ENCODE measurements at regions of chr19 and their contacts with region 1.

Region 1: GRCh38 chr19:44113138-44113783 is at the start of gene ZNF225:
- H3K4me3 Mint-ChIP-seq: peak within 1 kb of the TSS; percentile 95
- H3K27ac Mint-ChIP-seq: peak within 1 kb of the TSS; percentile 95
- H3K4me1 Mint-ChIP-seq: peaks cover 22% of the 10 kb centered on the region
- H3K27me3 Mint-ChIP-seq: peaks cover 3% of the 10 kb centered on the region

Region 2: DNA sequence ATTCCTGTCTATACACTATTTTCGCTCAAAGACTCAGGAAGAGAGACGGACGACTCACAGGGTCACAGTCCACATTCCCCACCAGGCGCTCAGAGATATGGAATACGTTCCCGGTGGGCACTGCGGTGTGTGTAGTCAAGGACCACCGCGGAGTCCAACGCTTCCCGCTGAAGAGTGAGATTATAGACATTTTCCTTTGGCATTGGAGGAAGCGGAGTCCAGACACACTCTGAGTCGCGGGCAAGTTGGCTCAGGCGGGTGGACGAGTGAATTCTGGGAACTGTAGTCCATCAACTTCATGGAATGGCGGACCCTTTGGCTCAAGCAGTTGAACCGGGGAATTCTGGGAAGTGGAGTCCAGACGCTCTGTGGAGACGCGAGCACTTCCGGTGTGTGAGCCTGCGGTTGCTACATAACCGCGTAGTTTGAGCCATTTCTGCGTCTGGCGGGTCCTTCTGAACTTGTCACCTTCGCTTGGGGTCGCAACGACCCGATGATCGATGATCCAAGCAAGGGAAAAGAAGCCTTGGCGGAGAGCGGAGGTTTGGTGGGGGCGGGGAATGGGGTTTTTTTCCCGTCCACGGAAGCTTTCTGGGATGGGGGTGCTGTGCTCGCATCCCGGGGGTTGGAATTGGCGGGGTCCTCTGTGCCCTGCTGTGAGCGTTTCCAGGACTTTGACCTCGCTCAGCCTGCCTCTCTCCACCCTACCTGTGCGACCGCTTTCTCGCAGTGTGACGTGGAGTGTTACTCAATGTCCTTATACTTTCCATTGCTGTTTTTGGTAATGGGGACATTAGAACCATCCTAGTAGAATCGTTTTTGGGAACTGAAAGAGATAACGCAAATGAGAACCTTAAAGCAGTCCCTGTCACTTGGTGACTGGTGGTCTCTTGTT is 110.4 kb before region 1 on chr19 and contains the start of gene ZNF230:
- intact Hi-C with region 1: loop called (anchors 1 kb)
- H3K4me3 Mint-ChIP-seq: peak within 1 kb of the TSS; percentile 97
- H3K27ac Mint-ChIP-seq: peak within 1 kb of the TSS; percentile 94
- H3K4me1 Mint-ChIP-seq: peaks cover 31% of the 10 kb centered on the region
- H3K27me3 Mint-ChIP-seq: peaks cover 2% of the 10 kb centered on the region

Region 3: DNA sequence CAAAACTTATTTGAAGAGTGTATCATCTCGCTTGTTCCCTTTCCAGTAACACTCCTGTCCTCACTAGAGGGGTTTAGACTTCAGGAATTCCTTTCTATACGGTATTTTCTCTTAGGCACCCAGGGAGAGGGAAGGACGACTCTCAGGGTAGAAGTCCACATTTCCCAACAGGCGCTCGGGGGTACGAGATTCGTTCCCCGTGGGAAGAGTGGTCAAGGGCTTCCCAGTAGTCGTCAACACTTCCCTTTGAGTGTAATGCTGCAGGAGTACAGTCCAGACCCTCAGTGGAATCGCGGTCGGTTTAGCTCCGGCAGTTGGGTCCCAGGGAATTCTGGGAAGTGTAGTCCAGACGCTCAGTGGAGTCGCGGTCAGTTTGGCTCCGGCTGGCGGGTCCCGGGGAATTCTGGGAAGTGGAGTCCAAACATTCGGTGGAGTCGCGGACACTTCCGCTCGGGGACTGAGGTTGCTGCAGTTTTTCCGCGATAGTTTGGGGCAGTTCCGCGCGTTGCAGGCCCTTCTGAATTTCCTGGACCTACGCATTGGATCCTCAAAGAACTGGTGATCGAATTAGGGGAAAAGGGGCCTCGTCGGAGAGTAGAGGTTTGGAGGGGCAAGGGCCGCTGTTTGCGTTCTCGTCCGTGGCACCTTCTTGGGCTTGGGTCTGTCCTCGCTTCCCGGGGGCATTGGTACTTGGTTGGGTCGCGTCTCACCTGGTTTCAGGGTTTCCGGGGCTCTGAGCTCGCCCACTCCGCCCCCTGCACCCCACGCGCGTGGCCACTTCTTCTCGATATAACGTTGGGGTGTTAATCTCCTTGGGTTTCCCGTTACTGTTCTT is 19.1 kb before region 1 on chr19 and contains the start of gene ZNF224:
- intact Hi-C with region 1: loop called (anchors 1 kb)
- H3K4me3 Mint-ChIP-seq: peak within 1 kb of the TSS; percentile 95
- H3K27ac Mint-ChIP-seq: peak within 1 kb of the TSS; percentile 93
- H3K4me1 Mint-ChIP-seq: peaks cover 7% of the 10 kb centered on the region
- H3K27me3 Mint-ChIP-seq: peaks cover 3% of the 10 kb centered on the region

Region 4: GRCh38 chr19:44164673-44165512 is 51.6 kb after region 1 on chr19 and contains the start of gene ZNF226:
- intact Hi-C with region 1: loop called (anchors 1 kb)
- H3K4me3 Mint-ChIP-seq: peak within 1 kb of the TSS; percentile 94
- H3K27ac Mint-ChIP-seq: peak within 1 kb of the TSS; percentile 98
- H3K4me1 Mint-ChIP-seq: peaks cover 13% of the 10 kb centered on the region
- H3K27me3 Mint-ChIP-seq: no peaks in the 10 kb centered on the region

Region 5: DNA sequence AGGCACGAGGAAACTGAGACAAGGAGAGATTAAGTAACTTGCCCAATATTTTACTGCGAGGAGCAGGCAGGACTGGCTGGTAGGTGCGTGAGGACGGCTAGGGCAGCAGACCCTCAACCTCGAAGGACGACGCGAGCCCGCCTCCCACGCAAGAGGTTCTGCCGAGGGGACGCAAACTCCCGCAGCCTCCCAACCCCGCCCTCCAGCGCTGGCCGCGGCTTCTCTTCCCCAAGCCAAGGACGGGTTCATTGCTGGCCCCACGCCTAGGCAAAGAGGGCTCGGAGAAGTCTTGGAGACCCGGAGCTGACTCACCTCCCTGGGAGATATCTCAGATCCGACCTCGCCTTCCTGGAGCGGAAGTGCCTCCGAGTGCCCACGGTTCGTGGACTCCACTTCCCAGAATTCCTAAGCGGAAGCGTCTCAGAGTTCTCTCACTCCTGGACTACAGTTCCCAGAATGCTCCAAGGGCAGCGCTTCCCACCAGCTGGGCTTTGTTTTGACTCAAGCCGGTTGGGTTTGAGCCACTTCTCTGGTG is 191.5 kb after region 1 on chr19 and contains the start of gene ZNF235:
- intact Hi-C with region 1: loop called (anchors 2 kb)
- H3K4me3 Mint-ChIP-seq: peak within 1 kb of the TSS; percentile 83
- H3K27ac Mint-ChIP-seq: peak within 1 kb of the TSS; percentile 81
- H3K4me1 Mint-ChIP-seq: peaks cover 11% of the 10 kb centered on the region
- H3K27me3 Mint-ChIP-seq: peaks cover 3% of the 10 kb centered on the region

Measured in dendritic cell treated with granulocyte-macrophage colony-stimulating factor and Interleukin-4, amounts not matched to agents 40 ng/mL and 50 ng/mL, for 4 days (primary cell).